MCF 10A (cell line): ENCODE measurements at regions of chr4 and their contacts with region 1.

Region 1: DNA sequence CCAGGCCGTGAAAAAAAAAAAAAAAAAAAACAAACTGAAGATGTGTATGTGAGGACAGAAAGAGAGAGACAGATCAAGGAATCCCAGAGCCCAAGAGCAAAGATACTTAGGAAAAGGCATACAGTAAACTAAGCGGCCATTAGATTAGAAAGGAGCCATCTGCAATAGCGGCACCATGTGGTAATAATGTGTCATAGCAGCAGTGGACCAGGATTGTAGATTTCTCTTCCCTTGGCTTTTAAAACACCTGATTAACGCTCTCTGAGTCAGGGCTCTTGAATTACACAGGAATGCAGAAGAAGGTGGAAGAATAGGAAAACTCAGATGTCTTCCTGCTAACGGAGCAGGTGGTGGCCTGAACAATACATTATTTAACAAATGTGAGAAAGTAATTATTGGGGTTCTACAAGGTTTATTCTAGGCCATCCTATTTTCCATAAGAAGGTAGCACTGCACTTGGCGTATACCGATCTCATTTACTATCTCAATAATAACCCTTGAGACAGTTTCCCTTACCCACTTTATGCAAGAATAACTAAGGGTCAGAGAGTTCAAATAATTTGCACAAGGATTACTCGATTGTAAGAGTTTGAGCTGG is 182.7 kb downstream of the KCNIP4 start:
- DNase-seq: peak; percentile 73
- H3K4me3 Mint-ChIP-seq: no peak overlapping the region
- H3K27ac Mint-ChIP-seq: no peak overlapping the region
- H3K4me1 Mint-ChIP-seq: peaks cover 6% of the 10 kb centered on the region
- H3K27me3 Mint-ChIP-seq: peaks cover 13% of the 10 kb centered on the region
- CTCF ChIP-seq: peak; percentile 76

Region 2: DNA sequence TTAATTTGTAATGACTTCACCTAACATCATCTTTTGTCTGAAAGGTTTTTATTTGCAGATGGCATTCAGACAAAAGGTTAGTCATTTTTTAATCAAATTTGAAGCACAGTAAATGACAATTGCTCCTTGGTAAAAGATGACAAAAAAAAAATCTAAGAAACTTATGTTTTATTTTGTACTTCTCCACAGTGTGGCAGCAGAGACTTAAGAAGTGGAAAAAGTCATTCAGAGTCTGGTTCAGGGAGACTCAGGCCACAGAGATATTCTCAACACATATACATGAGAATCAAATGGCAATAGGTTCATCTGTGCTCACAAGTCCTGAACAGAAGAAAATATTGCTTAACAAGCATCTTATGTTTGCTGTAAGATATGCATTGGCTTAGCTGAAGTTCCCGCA is 253.6 kb before region 1 on chr4:
- CTCF ChIA-PET with region 1: interaction called, 385 read pairs
- POLR2A ChIA-PET with region 1: interaction called, 10 read pairs
- intact Hi-C with region 1: loop called (anchors 1 kb)
- DNase-seq: peak; percentile 55
- H3K4me3 Mint-ChIP-seq: no peak overlapping the region
- H3K27ac Mint-ChIP-seq: no peak overlapping the region
- H3K4me1 Mint-ChIP-seq: peaks cover 5% of the 10 kb centered on the region
- H3K27me3 Mint-ChIP-seq: peaks cover 54% of the 10 kb centered on the region
- CTCF ChIP-seq: peak; percentile 62

Region 3: GRCh38 chr4:21753084-21753760 is 12.7 kb before region 1 on chr4:
- CTCF ChIA-PET with region 1: interaction called, 13 read pairs
- POLR2A ChIA-PET with region 1: no interaction called
- intact Hi-C with region 1: no loop called
- DNase-seq: no peak
- H3K4me3 Mint-ChIP-seq: no peak overlapping the region
- H3K27ac Mint-ChIP-seq: no peak overlapping the region
- H3K4me1 Mint-ChIP-seq: peaks cover 7% of the 10 kb centered on the region
- H3K27me3 Mint-ChIP-seq: peaks cover 8% of the 10 kb centered on the region
- CTCF ChIP-seq: no peak

Region 4: DNA sequence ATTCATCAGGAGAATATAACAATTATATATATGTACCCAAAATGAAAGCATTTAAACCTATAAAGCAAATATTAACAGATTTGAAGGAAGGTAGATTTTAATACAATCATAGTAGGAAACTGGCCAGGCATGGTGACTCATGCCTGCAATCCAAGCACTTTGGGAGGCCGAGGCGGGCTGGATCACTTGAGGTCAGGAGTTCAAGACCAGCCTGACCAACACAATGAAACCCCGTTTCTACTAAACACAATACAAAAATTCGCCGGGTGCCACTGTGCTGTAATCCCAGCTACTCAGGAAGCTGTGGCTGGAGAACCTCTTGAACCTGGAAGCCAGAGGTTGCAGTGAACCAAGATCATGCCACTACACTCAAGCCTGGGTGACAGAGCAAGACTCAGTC is 64.4 kb after region 1 on chr4:
- CTCF ChIA-PET with region 1: no interaction called
- POLR2A ChIA-PET with region 1: no interaction called
- intact Hi-C with region 1: no loop called
- DNase-seq: peak; percentile 6
- H3K4me3 Mint-ChIP-seq: no peak overlapping the region
- H3K27ac Mint-ChIP-seq: no peak overlapping the region
- H3K4me1 Mint-ChIP-seq: no peaks in the 10 kb centered on the region
- H3K27me3 Mint-ChIP-seq: no peaks in the 10 kb centered on the region
- CTCF ChIP-seq: no peak